Natural killer cell (primary cell): ENCODE measurements at regions of chr16 and their contacts with region 1.

Region 1: DNA sequence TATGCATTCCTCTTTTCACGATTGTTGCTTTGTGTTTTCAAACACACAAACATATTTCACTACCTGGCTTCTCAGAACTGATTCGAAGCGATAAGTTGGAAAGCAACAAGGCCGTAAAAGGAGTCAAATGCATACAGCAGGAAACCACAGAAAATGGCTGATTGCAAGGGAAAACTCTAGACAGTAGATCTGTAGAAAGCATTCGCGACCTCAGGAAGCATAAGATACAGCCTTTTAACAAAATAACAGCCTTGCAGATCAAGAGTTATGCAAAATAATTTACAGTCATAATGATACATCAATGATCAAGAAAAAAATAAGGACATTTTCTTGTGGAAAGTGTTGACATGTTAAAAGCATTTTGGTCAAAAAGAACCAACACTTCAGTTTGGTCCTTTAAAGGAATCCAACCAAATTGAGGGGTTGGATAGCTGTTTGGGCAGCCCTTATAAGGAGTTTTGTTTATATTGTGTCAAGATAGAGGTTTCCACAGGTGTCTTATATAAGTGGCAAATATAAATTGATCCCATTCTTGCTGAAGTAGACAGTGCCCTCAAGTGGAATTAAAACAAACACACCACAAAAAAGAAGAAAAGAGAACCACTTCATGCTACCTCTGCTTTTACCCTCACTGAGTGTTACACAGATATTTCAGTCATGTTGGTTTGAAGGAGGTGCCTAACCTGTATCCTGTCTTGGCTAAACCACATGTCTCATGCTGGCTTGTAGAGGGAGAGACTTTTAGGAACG is 5.5 kb downstream of the CYLD start:
- DNase-seq: peak in 1 of 2 donors; percentile 79
- ATAC-seq: peak; percentile 66 to 85 (median 73)
- H3K4me3 ChIP-seq: no peak overlapping the region
- H3K4me3 Mint-ChIP-seq: peak overlapping the region; percentile 83
- H3K27ac ChIP-seq: peak overlapping the region; percentile 80
- H3K27ac Mint-ChIP-seq: peak overlapping the region; percentile 87 to 92
- H3K4me1 ChIP-seq: peaks cover 20% of the 10 kb centered on the region
- H3K4me1 Mint-ChIP-seq: peaks cover 41 to 53% of the 10 kb centered on the region in 2 donors
- H3K27me3 ChIP-seq: no peaks in the 10 kb centered on the region
- H3K27me3 Mint-ChIP-seq: no peaks in the 10 kb centered on the region
- CTCF ChIP-seq: peak; percentile 56

Region 2: GRCh38 chr16:50548125-50548908 is 199.1 kb before region 1 on chr16 and contains the start of gene NKD1:
- intact Hi-C with region 1: loop called (anchors 2 kb)
- DNase-seq: peak; percentile 67 to 85
- ATAC-seq: peak; percentile 80 to 88 (median 85)
- H3K4me3 ChIP-seq: peak within 1 kb of the TSS; percentile 82
- H3K4me3 Mint-ChIP-seq: peak within 1 kb of the TSS; percentile 95
- H3K27ac ChIP-seq: peak within 1 kb of the TSS; percentile 43
- H3K27ac Mint-ChIP-seq: peak within 1 kb of the TSS; percentile 83 to 88
- H3K4me1 ChIP-seq: peaks cover 13% of the 10 kb centered on the region
- H3K4me1 Mint-ChIP-seq: peaks cover 5 to 16% of the 10 kb centered on the region in 2 donors
- H3K27me3 ChIP-seq: peaks cover 6% of the 10 kb centered on the region
- H3K27me3 Mint-ChIP-seq: peaks cover 13 to 31% of the 10 kb centered on the region in 2 donors
- CTCF ChIP-seq: no peak
- total RNA-seq, gene NKD1: 0.75 to 1.5 (median 1.0) TPM

Region 3: GRCh38 chr16:50671644-50672260 is 75.6 kb before region 1 on chr16:
- intact Hi-C with region 1: loop called (anchors 1 kb)
- DNase-seq: peak; percentile 46 to 76
- ATAC-seq: peak in 2 of 3 donors; percentile 39 to 65
- H3K4me3 ChIP-seq: no peak overlapping the region
- H3K4me3 Mint-ChIP-seq: peak overlapping the region; percentile 4
- H3K27ac ChIP-seq: no peak overlapping the region
- H3K27ac Mint-ChIP-seq: peak overlapping the region; percentile 56 to 70
- H3K4me1 ChIP-seq: peaks cover 14% of the 10 kb centered on the region
- H3K4me1 Mint-ChIP-seq: peaks cover 14 to 24% of the 10 kb centered on the region in 2 donors
- H3K27me3 ChIP-seq: no peaks in the 10 kb centered on the region
- H3K27me3 Mint-ChIP-seq: no peaks in the 10 kb centered on the region
- CTCF ChIP-seq: peak; percentile 65

Region 4: GRCh38 chr16:50692999-50693781 is 54.2 kb before region 1 on chr16 and contains the start of gene NOD2:
- intact Hi-C with region 1: no loop called
- DNase-seq: peak in 1 of 2 donors; percentile 64
- ATAC-seq: peak; percentile 14 to 39 (median 38)
- H3K4me3 ChIP-seq: peak within 1 kb of the TSS; percentile 46
- H3K4me3 Mint-ChIP-seq: peak within 1 kb of the TSS; percentile 72
- H3K27ac ChIP-seq: no peak within 1 kb of the TSS
- H3K27ac Mint-ChIP-seq: peak within 1 kb of the TSS; percentile 5 to 60
- H3K4me1 ChIP-seq: peaks cover 49% of the 10 kb centered on the region
- H3K4me1 Mint-ChIP-seq: peaks cover 39 to 46% of the 10 kb centered on the region in 2 donors
- H3K27me3 ChIP-seq: no peaks in the 10 kb centered on the region
- H3K27me3 Mint-ChIP-seq: peaks cover 0 to 19% of the 10 kb centered on the region in 2 donors
- CTCF ChIP-seq: no peak
- total RNA-seq, gene NOD2: 2.8 to 8.6 (median 2.9) TPM

Region 5: DNA sequence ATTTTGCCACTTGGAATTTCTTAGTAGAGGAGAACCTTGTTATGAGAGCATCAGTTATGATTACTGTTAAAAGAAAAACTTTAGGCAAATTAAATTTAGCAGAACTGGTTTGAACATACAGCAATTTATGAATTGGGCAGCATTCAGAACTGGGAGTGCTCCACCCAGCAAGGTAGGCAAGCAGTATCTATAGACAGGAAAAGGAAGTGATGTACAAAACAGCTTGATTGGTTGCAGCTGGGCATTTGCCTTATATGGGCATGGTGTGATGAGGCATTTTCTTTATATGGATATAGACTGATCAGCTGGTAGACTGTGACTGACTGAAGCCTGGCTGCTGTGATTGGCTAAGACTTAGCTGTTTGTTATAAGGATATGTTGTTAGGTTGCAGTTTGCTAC is 23.1 kb before region 1 on chr16:
- intact Hi-C with region 1: no loop called
- DNase-seq: no peak
- ATAC-seq: no peak
- H3K4me3 ChIP-seq: no peak overlapping the region
- H3K4me3 Mint-ChIP-seq: no peak overlapping the region
- H3K27ac ChIP-seq: peak overlapping the region; percentile 3
- H3K27ac Mint-ChIP-seq: peak overlapping the region; percentile 82 to 97
- H3K4me1 ChIP-seq: peaks cover 36% of the 10 kb centered on the region
- H3K4me1 Mint-ChIP-seq: peaks cover 38 to 39% of the 10 kb centered on the region in 2 donors
- H3K27me3 ChIP-seq: no peaks in the 10 kb centered on the region
- H3K27me3 Mint-ChIP-seq: no peaks in the 10 kb centered on the region
- CTCF ChIP-seq: no peak